Motor neuron (in vitro differentiated cells): ENCODE measurements at regions of chr14 and their contacts with region 1.

Region 1: GRCh38 chr14:68248481-68249255 is 429.1 kb downstream of the RAD51B start:
- ATAC-seq: peak; percentile 13 to 92 (median 84)
- H3K4me3 ChIP-seq: no peak overlapping the region
- H3K27ac ChIP-seq: no peak overlapping the region
- H3K4me1 ChIP-seq: peaks cover 43 to 48% of the 10 kb centered on the region in 2 donors

Region 2: DNA sequence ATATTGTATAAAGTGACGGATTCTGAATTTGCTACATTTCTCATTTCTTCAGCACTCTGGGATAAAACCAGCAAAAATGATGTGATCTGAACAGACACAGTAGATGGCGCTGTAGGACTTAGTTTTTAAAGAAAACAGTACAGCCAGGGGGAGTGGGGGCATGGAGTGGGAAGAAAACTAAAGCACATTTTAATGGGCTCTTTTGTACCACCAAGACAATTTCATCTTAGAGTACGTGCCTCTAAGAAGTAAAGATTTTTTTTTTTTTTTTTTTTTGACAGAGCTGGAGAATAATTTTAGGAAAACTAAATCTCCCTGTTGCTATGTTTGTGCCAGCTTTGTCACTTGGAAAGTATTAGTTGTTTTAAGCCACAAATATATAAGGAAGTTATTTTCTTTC is 304.7 kb before region 1 on chr14:
- in situ Hi-C with region 1: loop called in 2 of 9 experiments (anchors 10 to 25 kb)
- ATAC-seq: peak; percentile 38 to 77 (median 58)
- H3K4me3 ChIP-seq: no peak overlapping the region
- H3K27ac ChIP-seq: no peak overlapping the region
- H3K4me1 ChIP-seq: peaks cover 17 to 25% of the 10 kb centered on the region in 2 donors

Region 3: DNA sequence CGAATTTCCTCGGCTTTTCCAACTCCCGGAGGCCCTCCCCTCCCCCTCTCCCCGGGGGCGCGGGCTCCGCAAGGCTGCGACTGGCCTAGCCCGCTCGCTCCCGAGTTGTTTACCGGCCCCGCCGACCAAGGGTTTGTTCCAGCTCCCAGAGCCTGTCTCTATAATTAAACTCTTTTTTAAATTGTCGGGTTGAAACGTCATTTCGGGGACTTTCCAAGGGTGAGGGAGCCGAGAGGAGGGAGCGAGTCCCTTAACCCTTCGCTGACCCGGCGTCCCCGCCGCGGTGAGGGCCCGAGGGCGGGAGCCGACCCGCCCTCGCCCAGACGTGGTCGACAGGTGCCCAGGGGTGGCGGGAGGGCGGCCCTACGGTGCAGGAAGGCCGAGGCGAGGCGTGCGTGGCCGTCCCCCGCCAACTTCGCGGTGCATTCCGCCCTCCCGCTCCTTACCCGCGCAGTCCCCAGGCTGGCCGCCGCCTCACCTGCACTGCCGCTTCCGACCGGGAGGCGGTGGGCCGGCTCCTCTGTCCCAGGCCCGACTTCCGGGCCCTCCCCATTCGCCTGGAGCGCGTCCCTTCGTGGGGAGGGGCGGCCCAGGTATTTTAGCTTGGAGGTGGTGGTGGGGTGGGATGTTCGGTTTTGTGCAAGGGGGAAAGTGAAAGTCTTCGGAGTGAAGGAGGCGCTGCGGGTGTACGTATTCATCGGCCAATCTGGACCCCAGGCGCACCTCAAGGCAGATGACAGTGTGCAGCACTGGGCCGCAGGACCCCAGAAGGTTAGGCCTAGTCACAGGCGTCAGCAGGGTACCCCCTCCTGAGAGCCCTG is 547.1 kb after region 1 on chr14:
- in situ Hi-C with region 1: loop called in 7 of 9 experiments (anchors 10 to 25 kb)
- ATAC-seq: peak; percentile 24 to 80 (median 76)
- H3K4me3 ChIP-seq: peak overlapping the region; percentile 36 to 49 (median 44)
- H3K27ac ChIP-seq: peak overlapping the region; percentile 82 to 86
- H3K4me1 ChIP-seq: peaks cover 11 to 26% of the 10 kb centered on the region in 2 donors

Region 4: GRCh38 chr14:68807148-68807600 is 558.5 kb after region 1 on chr14:
- in situ Hi-C with region 1: loop called in 4 of 9 experiments (anchors 10 to 25 kb)
- ATAC-seq: peak in 5 of 8 experiments; percentile 16 to 92 (median 75)
- H3K4me3 ChIP-seq: no peak overlapping the region
- H3K27ac ChIP-seq: no peak overlapping the region
- H3K4me1 ChIP-seq: no peaks in the 10 kb centered on the region

Region 5: DNA sequence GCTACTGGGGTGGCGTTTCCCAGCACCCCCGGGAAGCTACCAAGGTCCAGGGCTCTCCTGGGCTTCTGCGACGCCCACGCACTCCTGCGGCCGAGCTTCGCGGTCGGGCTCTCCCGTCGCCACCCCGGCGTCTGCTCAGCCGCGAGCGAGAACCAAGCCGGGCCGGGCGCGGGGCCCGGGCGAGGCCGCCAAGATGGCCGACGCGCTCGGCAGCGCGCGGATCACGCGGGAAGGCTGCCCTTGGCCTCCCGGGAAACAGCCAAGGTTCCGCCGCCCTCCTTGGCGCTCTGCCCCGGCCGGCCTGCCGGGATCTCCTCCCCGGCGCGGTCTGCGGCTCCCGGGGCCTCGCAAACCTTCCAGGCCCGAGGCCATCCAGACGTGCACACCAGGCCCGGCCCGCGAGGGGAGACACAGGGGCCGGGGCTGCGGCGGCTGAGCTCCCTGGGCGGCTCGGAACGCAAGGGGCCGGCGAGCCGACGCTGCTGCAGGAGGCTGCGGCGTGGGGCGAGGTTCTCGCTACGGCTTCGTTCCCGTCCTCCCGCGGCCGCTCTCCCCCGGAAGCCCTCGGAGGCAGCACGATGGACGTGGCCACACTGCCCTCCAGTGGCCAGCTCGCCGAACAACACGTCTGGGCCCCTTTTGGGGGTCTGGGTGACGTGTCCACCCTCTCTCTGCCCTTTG is 567.7 kb after region 1 on chr14:
- in situ Hi-C with region 1: loop called in 3 of 9 experiments (anchors 25 kb)
- ATAC-seq: peak; percentile 63 to 97 (median 96)
- H3K4me3 ChIP-seq: peak overlapping the region; percentile 23 to 36 (median 31)
- H3K27ac ChIP-seq: peak overlapping the region; percentile 96 to 97
- H3K4me1 ChIP-seq: peaks cover 24 to 29% of the 10 kb centered on the region in 2 donors